Naive thymus-derived CD4-positive, alpha-beta T cell (primary cell): ENCODE measurements at regions of chr2 and their contacts with region 1.

Region 1: DNA sequence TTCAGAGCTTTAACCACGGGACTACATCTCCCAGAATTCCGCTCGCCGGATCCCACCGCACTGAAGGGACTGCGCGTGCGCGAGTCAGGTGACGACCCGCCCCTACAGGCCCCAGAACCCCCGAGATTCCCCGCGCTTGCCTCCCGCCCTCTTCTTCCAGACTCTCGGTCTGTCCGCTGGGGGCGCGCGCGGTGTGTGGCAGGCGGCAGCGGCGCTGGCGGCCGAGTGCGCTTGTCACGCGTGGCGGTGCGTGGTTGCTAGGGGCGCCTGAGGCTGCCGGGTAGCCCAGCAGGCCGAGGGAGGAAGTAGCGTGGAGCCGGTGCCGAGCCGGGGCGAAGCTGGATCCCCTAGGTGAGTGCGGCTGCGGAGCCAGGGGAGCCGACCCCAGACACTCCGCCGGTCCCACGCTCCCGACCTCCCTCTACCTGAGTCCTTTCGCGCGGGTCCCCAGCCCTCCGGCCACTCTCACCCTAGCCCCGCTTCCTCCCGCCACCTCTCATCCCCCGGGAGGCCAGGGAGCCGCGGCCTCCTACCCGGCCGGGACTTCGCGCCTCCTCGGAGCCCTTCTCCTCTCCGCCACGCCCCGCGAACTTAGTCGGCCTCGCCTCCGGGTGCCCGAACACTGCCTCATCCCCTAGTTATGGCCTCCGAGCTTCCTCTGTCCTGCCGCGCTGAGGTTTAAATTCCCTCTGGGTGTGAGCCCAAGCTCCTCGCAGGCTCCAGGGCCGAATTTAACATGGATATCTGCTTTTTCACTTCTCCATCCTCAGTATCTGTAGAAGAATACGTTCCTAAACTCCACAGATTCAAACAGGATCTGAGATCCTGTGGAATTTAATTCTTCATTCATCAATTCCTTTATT is at the start of gene TTLL4:
- DNase-seq: peak; percentile 98 to 99 (median 99)
- ATAC-seq: peak; percentile 99
- H3K4me3 ChIP-seq: peak within 1 kb of the TSS; percentile 79
- H3K4me3 Mint-ChIP-seq: peak within 1 kb of the TSS; percentile 91 to 99 (median 97)
- H3K27ac ChIP-seq: peak within 1 kb of the TSS; percentile 86
- H3K27ac Mint-ChIP-seq: peak within 1 kb of the TSS; percentile 58 to 96 (median 90)
- H3K4me1 ChIP-seq: peaks cover 8% of the 10 kb centered on the region in 2 donors
- H3K4me1 Mint-ChIP-seq: peaks cover 17 to 31% (median 19%) of the 10 kb centered on the region in 7 donors
- H3K27me3 ChIP-seq: no peaks in the 10 kb centered on the region
- H3K27me3 Mint-ChIP-seq: peaks cover 0 to 7% (median 0%) of the 10 kb centered on the region in 5 donors
- total RNA-seq, gene TTLL4: 18.7 to 35.8 (median 21.2) TPM

Region 2: DNA sequence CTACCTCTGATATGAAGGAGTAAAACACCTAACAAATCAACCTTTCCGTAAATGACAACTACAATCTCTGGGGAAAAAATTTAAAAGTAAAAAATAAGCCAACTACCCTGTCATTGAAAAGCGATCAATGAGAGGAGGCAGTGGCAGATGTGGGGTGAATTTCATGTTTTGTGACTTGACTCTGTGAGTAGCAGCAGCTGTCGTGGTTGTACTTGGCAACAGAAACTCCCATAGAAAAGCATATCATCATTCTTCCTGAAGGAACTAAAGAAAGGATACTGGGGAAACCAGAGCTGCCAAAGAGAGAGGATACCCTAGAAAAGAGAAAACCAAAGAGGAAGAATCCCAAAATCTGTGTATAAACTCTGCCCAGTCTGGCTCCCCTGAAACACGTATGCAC is 944.6 kb before region 1 on chr2:
- CTCF ChIA-PET with region 1: no interaction called
- POLR2A ChIA-PET with region 1: no interaction called
- intact Hi-C with region 1: no loop called
- DNase-seq: no peak
- ATAC-seq: no peak
- H3K4me3 ChIP-seq: no peak overlapping the region
- H3K4me3 Mint-ChIP-seq: no peak overlapping the region
- H3K27ac ChIP-seq: no peak overlapping the region
- H3K27ac Mint-ChIP-seq: no peak overlapping the region
- H3K4me1 ChIP-seq: no peaks in the 10 kb centered on the region
- H3K4me1 Mint-ChIP-seq: no peaks in the 10 kb centered on the region
- H3K27me3 ChIP-seq: no peaks in the 10 kb centered on the region
- H3K27me3 Mint-ChIP-seq: peaks cover 0 to 22% (median 17%) of the 10 kb centered on the region in 5 donors

Region 3: DNA sequence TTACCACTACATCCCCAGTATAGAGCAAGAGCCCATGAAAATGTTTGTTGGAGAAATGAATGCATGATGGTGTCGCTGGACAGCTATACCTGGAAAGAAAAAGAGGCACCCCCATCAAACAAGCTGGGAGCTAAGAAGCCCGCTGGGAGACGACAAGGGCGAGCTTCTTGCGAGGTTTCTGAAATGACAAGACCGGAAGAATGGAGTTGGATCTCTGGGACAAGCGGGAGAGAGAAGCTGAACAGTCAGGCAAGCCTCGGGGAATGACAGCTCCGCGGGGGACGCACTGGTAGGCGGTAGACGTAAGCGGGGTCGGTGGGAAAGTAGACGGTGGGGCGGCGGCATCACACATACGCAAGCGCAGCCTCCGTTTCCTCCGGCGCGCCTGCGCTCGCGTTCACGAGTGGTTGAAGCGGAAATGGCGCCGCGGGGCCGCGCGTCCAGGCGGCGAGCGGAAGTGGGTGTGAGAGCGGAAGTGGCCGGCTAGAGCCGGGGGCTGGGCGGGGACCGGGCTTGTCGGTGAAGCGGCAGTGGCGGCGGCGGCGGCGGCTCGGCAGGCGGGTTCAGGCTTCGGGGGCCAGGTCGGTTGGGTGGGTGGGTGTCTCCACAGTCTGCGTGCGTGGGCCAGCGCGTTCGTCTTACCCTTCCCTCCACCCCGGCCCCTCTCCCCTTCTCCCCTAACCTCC is 494.1 kb before region 1 on chr2 and contains the start of gene ARPC2:
- CTCF ChIA-PET with region 1: no interaction called
- POLR2A ChIA-PET with region 1: no interaction called
- intact Hi-C with region 1: loop called (anchors 1 kb)
- DNase-seq: peak; percentile 91 to 97 (median 95)
- ATAC-seq: peak; percentile 90
- H3K4me3 ChIP-seq: peak within 1 kb of the TSS; percentile 90
- H3K4me3 Mint-ChIP-seq: peak within 1 kb of the TSS; percentile 90 to 97 (median 94)
- H3K27ac ChIP-seq: peak within 1 kb of the TSS; percentile 99
- H3K27ac Mint-ChIP-seq: peak within 1 kb of the TSS; percentile 94 to 98 (median 97)
- H3K4me1 ChIP-seq: peaks cover 25 to 33% of the 10 kb centered on the region in 2 donors
- H3K4me1 Mint-ChIP-seq: peaks cover 31 to 48% (median 42%) of the 10 kb centered on the region in 7 donors
- H3K27me3 ChIP-seq: no peaks in the 10 kb centered on the region
- H3K27me3 Mint-ChIP-seq: peaks cover 0 to 6% (median 0%) of the 10 kb centered on the region in 5 donors
- total RNA-seq, gene ARPC2: 330 to 694 (median 368) TPM

Region 4: DNA sequence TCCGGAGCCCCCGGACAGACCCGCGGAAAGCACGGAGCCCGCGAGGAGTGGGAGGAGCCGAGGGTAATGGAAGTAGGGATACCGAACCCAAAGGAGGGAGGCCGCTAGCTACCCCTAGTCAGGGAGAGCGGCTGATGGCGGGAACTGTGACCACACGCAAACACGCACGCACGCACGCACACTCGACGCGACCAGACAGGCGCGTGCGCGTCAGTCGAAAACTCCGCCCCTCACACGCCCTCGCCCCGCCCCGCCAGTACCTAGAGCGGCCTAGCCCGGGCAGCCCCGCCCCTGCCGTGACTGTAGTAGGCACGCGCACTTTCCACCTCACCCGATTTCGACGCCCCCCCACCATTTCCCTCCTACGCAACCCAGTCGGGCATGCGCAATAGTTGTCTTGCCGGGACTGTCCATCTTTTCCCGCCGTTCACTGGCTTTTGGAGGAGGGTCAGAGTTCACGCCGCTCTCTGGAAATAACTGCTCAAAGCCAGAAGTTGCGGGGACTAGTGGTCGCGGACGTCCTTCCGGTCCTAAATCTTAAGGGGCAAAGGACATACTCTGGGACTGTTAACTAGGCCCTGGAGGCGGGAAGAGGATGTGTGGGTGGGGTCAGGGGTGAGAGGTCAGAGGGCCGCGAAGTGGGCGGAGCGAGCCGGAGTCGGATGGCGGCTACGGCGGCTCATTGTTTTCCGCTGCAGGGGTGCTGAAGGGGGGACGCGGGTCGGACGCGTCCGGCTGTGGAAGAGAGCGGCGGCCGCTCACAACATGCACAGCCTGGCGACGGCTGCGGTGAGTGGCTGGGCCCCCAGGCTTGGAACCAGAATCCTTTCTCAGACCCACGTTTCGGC is 142.5 kb before region 1 on chr2 and contains the starts of genes CNOT9 and USP37:
- CTCF ChIA-PET with region 1: no interaction called
- POLR2A ChIA-PET with region 1: no interaction called
- intact Hi-C with region 1: loop called (anchors 1 kb)
- DNase-seq: peak; percentile 99 to 100 (median 100)
- ATAC-seq: peak; percentile 95
- H3K4me3 ChIP-seq: peak within 1 kb of the TSS; percentile 78
- H3K4me3 Mint-ChIP-seq: peak within 1 kb of the TSS; percentile 90 to 100 (median 98)
- H3K27ac ChIP-seq: peak within 1 kb of the TSS; percentile 96
- H3K27ac Mint-ChIP-seq: peak within 1 kb of the TSS; percentile 97 to 100 (median 99)
- H3K4me1 ChIP-seq: peaks cover 22 to 31% of the 10 kb centered on the region in 2 donors
- H3K4me1 Mint-ChIP-seq: peaks cover 45 to 73% (median 64%) of the 10 kb centered on the region in 7 donors
- H3K27me3 ChIP-seq: no peaks in the 10 kb centered on the region
- H3K27me3 Mint-ChIP-seq: no peaks in the 10 kb centered on the region
- total RNA-seq, gene CNOT9: 44.7 to 99.6 (median 53.8) TPM
- total RNA-seq, gene USP37: 16.6 to 36.3 (median 28.1) TPM

Region 5: GRCh38 chr2:218892693-218893348 is 181.9 kb after region 1 on chr2:
- CTCF ChIA-PET with region 1: interaction called, 8 read pairs
- POLR2A ChIA-PET with region 1: no interaction called
- intact Hi-C with region 1: loop called (anchors 2 to 5 kb)
- DNase-seq: peak; percentile 82 to 93 (median 91)
- ATAC-seq: peak; percentile 78
- H3K4me3 ChIP-seq: peak overlapping the region; percentile 48
- H3K4me3 Mint-ChIP-seq: peak overlapping the region; percentile 58 to 85 (median 75)
- H3K27ac ChIP-seq: peak overlapping the region; percentile 89
- H3K27ac Mint-ChIP-seq: peak overlapping the region; percentile 59 to 96 (median 89)
- H3K4me1 ChIP-seq: peaks cover 53 to 54% of the 10 kb centered on the region in 2 donors
- H3K4me1 Mint-ChIP-seq: peaks cover 38 to 56% (median 52%) of the 10 kb centered on the region in 7 donors
- H3K27me3 ChIP-seq: no peaks in the 10 kb centered on the region
- H3K27me3 Mint-ChIP-seq: peaks cover 0 to 76% (median 0%) of the 10 kb centered on the region in 5 donors

Region 6: DNA sequence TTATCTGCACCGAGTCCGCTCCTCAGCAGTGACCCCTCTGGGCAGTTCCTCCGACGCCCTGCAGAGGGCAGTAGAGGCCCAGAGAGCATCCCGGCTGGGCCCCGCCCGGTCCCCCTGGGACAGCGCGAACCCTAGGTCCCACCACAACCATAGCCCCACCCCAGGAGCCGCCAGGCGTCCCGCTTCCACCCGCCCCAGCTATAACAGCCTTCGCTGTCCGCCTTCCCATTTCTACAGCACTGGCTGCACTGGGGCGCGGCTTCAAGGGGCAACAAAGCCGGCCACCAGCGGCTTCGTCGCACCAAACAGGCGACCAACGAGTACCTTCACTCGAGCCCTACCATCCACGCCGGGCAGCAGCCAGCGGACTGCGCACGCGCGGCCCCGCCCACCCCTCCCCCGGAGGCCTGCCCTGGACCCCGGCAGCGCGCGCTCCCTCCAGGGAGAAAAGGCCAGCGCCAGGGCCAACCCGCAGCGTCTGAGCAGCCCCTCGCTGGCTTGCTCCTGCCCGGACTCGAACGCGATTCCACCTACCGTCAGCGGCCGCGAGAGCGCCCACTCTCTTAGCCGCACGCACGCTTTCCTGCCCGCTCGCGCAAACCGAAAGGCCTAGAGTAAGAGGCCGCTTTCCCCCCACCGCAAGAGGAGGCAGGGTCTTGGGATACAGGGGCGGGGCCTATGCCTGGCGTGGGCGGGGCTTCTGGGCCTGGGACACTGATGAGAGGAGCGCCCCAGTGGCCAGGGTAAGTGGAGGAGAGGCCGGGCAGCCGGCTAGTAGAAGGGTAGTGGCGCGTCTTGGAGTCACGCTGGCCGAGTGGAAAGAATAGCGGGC is 449.5 kb after region 1 on chr2 and contains the start of gene NHEJ1:
- CTCF ChIA-PET with region 1: no interaction called
- POLR2A ChIA-PET with region 1: no interaction called
- intact Hi-C with region 1: loop called (anchors 1 to 5 kb)
- DNase-seq: peak; percentile 84 to 98 (median 92)
- ATAC-seq: peak; percentile 96
- H3K4me3 ChIP-seq: peak within 1 kb of the TSS; percentile 70
- H3K4me3 Mint-ChIP-seq: peak within 1 kb of the TSS; percentile 88 to 97 (median 93)
- H3K27ac ChIP-seq: peak within 1 kb of the TSS; percentile 77
- H3K27ac Mint-ChIP-seq: peak within 1 kb of the TSS; percentile 81 to 97 (median 93)
- H3K4me1 ChIP-seq: peaks cover 11 to 12% of the 10 kb centered on the region in 2 donors
- H3K4me1 Mint-ChIP-seq: peaks cover 13 to 41% (median 24%) of the 10 kb centered on the region in 7 donors
- H3K27me3 ChIP-seq: no peaks in the 10 kb centered on the region
- H3K27me3 Mint-ChIP-seq: no peaks in the 10 kb centered on the region
- total RNA-seq, gene NHEJ1: 11.4 to 24.0 (median 17.9) TPM

Region 7: DNA sequence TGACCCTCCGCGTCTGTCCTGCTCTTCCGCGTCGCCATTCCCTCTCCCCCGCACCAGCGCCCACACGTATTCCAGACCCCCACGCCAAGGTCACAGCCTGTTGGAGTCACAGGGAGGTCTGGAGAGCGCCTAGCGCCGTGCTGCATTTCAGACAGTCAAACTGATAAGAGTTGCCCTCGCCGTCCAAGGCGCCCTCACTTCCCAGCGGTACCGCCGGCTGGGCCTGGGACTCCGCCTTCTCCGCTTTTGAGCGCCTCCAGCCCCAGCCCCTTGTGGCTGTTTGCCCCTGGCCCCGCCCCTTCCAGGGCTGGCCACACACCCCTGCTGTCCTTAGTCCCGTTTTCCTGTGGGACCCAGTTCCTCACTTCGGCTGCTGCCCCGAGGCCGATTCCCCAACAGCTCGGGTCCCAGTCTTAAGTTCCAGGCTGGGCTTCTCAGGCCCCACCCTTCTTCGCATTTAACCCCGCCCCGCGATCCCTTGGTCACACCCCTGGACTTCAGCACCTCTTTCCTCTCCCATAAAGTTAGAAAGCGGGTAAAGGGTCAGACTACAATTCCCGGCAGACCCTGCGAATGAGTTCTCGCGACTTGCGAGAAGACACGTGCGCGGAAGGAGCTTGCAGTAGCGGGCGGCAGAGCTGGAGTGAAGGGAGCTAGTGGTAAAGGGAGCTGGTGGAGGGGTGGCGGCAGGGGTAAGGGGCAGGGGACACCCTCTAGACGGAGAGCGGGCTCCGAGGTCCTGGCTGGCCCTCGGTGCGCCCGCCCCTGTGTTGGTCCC is 787.6 kb after region 1 on chr2 and contains the start of gene GMPPA:
- CTCF ChIA-PET with region 1: no interaction called
- POLR2A ChIA-PET with region 1: no interaction called
- intact Hi-C with region 1: loop called in 1 of 2 experiments (anchors 2 kb)
- DNase-seq: peak; percentile 78 to 95 (median 90)
- ATAC-seq: peak; percentile 94
- H3K4me3 ChIP-seq: peak within 1 kb of the TSS; percentile 85
- H3K4me3 Mint-ChIP-seq: peak within 1 kb of the TSS; percentile 91 to 99 (median 96)
- H3K27ac ChIP-seq: peak within 1 kb of the TSS; percentile 79
- H3K27ac Mint-ChIP-seq: peak within 1 kb of the TSS; percentile 76 to 97 (median 86)
- H3K4me1 ChIP-seq: peaks cover 19 to 22% of the 10 kb centered on the region in 2 donors
- H3K4me1 Mint-ChIP-seq: peaks cover 26 to 42% (median 36%) of the 10 kb centered on the region in 7 donors
- H3K27me3 ChIP-seq: peaks cover 4 to 9% of the 10 kb centered on the region in 2 donors
- H3K27me3 Mint-ChIP-seq: peaks cover 28 to 47% (median 40%) of the 10 kb centered on the region in 5 donors
- total RNA-seq, gene GMPPA: 22.4 to 58.3 (median 37.2) TPM